Caco-2 (cell line): ENCODE measurements at regions of chr10 and their contacts with region 1.

Region 1: DNA sequence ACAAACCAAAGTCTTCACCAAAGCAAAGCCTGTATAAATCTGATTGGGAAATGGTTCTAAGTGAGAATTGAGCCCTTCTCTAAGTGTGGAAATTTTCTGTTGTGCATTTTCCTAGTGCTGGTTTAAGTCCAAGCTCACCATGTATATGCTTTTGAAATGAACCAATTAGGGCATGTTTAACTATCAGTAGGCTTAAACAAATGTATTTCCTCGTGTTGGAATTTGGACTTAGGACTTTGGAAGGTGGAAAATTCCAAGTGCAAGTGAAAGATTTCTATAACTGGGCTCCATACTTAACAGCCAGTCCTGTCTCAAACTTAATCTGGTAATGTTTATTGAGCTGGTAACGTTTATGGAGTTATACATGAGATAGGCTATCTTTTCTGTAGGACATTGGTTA is 28.5 kb downstream of the CCNY start:
- DNase-seq: peak in 1 of 2 experiments; percentile 75
- H3K4me3 ChIP-seq: no peak overlapping the region
- H3K4me3 Mint-ChIP-seq: peak overlapping the region; percentile 62
- H3K27ac Mint-ChIP-seq: peak overlapping the region; percentile 78
- H3K4me1 ChIP-seq: peaks cover 67% of the 10 kb centered on the region
- H3K4me1 Mint-ChIP-seq: peaks cover 45% of the 10 kb centered on the region
- H3K27me3 ChIP-seq: no peaks in the 10 kb centered on the region
- H3K27me3 Mint-ChIP-seq: no peaks in the 10 kb centered on the region
- CTCF ChIP-seq: no peak

Region 2: GRCh38 chr10:35384265-35384868 is 19.6 kb after region 1 on chr10:
- CTCF ChIA-PET with region 1: interaction called, 7 read pairs
- POLR2A ChIA-PET with region 1: interaction called, 9 read pairs
- intact Hi-C with region 1: loop called (anchors 1 kb)
- DNase-seq: peak; percentile 74 to 80
- H3K4me3 ChIP-seq: no peak overlapping the region
- H3K4me3 Mint-ChIP-seq: peak overlapping the region; percentile 48
- H3K27ac Mint-ChIP-seq: peak overlapping the region; percentile 85
- H3K4me1 ChIP-seq: peaks cover 44% of the 10 kb centered on the region
- H3K4me1 Mint-ChIP-seq: peaks cover 53% of the 10 kb centered on the region
- H3K27me3 ChIP-seq: no peaks in the 10 kb centered on the region
- H3K27me3 Mint-ChIP-seq: no peaks in the 10 kb centered on the region
- CTCF ChIP-seq: no peak